Activated B cell treated with CpG ODN at 0.5 μM for 24 hours (primary cell): ENCODE measurements at regions of chr5 and their contacts with region 1.

Region 1: DNA sequence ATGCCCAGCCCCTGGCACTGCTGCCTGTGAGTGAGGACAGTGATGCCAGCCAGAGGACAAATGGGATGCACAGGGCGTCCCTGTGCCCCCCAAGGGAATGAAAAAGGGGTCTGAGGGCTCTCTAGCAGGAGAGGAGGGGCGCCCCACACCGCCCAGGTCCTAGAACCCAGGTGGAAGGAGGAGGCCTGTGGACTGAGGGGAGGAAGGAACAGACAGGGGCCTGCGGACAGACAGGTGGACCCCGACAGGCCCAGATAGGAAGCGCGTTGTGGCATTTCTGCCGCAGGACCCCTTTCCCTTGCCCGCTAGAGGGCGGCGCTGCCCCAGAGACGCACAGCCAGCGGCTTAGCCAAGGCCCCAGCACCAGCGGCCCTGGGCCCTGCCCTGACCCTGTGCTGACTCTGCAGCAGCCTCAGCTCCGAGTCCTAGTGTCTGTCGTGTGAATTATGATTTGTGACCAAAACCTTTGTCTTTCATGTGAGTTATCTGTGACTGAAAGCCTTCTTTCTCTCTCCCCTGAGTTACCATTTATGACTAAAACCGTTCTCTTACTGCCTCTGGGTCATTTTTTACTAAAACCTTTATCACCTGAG is 30.7 kb downstream of the TRIP13 start:
- DNase-seq: peak; percentile 65
- ATAC-seq: peak; percentile 89
- H3K4me3 Mint-ChIP-seq: no peak overlapping the region
- H3K27ac Mint-ChIP-seq: no peak overlapping the region
- H3K4me1 Mint-ChIP-seq: no peaks in the 10 kb centered on the region
- H3K27me3 Mint-ChIP-seq: peaks cover 18% of the 10 kb centered on the region
- CTCF ChIP-seq: peak; percentile 59

Region 2: DNA sequence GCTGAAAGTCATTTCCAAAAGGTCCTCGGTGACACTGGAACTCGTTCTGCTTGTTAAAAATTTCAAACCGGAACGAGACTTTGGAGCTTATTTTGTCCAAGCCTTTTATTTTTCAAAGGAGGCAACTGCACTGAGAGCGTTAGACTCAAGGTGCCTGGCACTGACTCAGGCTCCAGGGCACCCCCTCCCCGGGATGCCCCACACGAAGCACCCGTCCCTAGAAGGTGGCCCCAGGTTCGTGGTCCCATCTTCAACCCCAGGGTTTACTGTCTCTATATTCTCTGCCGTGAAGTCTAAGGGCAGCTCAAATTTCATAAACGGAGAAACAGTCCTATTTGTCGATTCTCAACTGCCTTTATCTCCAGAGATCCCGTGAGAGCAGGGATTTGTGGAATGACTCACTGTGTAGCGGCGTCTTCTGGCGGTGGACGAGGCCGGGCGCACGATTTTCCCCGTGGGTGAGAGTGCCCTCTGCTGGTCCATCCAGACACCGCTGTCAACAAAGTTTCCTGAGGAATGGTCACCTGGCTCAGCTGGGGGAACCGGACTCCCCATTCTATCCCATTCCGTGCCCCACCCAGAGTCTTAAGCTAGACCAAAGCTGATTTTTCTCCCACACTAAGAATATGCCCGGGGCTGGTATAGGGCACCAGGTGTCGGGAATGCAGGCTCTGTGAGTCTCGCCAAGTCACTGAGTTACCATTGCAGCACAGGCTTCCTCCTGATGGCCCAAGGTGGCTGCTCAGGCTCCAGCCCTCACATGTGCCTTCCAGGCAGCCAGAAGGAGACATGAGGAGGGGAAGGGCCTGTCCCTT is 251.0 kb after region 1 on chr5:
- CTCF ChIA-PET with region 1: interaction called, 15 read pairs
- POLR2A ChIA-PET with region 1: no interaction called
- intact Hi-C with region 1: loop called (anchors 1 kb)
- DNase-seq: peak; percentile 33
- ATAC-seq: peak; percentile 37
- H3K4me3 Mint-ChIP-seq: no peak overlapping the region
- H3K27ac Mint-ChIP-seq: no peak overlapping the region
- H3K4me1 Mint-ChIP-seq: no peaks in the 10 kb centered on the region
- H3K27me3 Mint-ChIP-seq: peaks cover 7% of the 10 kb centered on the region
- CTCF ChIP-seq: no peak